Aorta (tissue), 5 donors: ENCODE measurements at regions of chr12 and their contacts with region 1.

Region 1: DNA sequence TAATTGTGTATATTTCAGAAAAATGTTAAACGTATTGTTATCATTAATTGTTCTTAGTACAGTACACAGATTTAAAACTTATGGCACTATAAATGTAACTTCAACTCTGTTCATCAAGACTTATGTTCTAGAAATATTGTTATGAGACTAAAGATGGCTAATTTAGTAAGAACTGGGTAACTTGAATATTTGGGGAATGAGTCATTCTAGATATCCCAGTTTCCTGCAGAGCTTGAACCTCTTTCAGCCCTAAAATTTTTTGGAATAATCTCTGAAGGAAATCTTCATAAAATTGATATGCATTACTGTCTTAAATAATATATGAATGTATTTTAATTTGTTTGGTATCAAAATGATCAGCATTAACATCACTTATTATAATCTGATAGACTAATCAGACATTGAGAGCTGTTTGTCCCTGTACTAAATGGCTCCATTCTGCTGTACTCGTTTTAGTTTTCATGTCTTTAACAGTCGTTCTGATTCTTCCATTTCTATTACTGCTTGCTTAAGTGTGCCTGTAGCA is 87.1 kb downstream of the VEZT start:
- DNase-seq: no peak
- ATAC-seq: no peak
- H3K4me3 ChIP-seq: no peak overlapping the region
- H3K27ac ChIP-seq: no peak overlapping the region
- H3K4me1 ChIP-seq: peaks cover 0 to 4% of the 10 kb centered on the region in 2 donors
- H3K27me3 ChIP-seq: no peaks in the 10 kb centered on the region

Region 2: GRCh38 chr12:95248604-95249360 is 56.0 kb before region 1 on chr12:
- intact Hi-C with region 1: loop called in 1 of 2 experiments (anchors 10 kb)
- DNase-seq: no peak
- ATAC-seq: no peak
- H3K4me3 ChIP-seq: no peak overlapping the region
- H3K27ac ChIP-seq: no peak overlapping the region
- H3K4me1 ChIP-seq: peaks cover under 1 to 4% of the 10 kb centered on the region in 2 donors
- H3K27me3 ChIP-seq: no peaks in the 10 kb centered on the region

Region 3: DNA sequence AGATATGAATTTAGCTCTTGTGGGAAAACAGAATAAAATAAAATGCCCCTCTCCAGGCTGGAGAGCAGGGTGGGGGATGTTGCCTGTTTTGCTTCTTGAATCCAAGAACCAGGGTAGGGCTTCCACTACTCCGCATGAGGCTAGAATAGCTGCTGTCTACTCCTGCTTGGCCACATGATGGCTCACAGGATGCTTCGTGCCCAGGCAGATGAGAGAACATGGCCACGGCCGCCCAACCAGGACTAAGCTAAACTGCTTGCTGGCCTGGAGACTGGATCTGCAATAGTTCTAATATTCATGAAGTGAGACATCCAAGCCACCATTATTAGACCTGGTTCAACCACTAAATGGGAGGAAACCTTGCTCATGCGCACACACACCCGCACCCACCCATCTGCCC is 47.0 kb after region 1 on chr12:
- intact Hi-C with region 1: no loop called
- DNase-seq: peak; percentile 51 to 83
- ATAC-seq: peak; percentile 82
- H3K4me3 ChIP-seq: no peak overlapping the region
- H3K27ac ChIP-seq: no peak overlapping the region
- H3K4me1 ChIP-seq: no peaks in the 10 kb centered on the region
- H3K27me3 ChIP-seq: no peaks in the 10 kb centered on the region

Region 4: DNA sequence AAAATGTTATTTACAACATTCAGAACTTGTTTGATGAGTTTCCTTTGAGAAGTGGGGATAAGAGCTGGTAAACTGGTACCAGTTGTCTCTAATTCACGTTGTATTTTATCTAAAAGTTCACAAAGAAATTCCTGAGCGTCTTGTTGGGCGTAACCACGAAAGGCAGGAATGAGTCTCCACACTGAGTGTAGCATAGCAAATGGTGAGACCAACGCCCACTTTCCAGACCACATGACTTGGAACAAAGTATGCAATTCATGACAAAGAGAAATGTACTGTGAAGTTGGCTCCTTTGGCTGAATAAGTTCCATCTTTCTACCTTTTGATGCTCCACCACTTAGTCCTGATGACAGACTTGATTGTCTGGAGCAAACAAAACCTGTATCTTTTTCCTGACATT is 228.1 kb after region 1 on chr12:
- intact Hi-C with region 1: no loop called
- DNase-seq: no peak
- ATAC-seq: no peak
- H3K4me3 ChIP-seq: no peak overlapping the region
- H3K27ac ChIP-seq: no peak overlapping the region
- H3K4me1 ChIP-seq: peaks cover 0 to 4% of the 10 kb centered on the region in 2 donors
- H3K27me3 ChIP-seq: no peaks in the 10 kb centered on the region